Mucosa of descending colon (tissue), 3 donors: ENCODE measurements at regions of chr11 and their contacts with region 1.

Region 1: GRCh38 chr11:123707606-123708205 is 33.8 kb downstream of the ZNF202 start:
- DNase-seq: peak in 2 of 3 donors; percentile 46 to 83
- ATAC-seq: peak; percentile 69
- H3K4me3 ChIP-seq: no peak overlapping the region
- H3K4me1 ChIP-seq: no peaks in the 10 kb centered on the region
- CTCF ChIP-seq: no peak

Region 2: DNA sequence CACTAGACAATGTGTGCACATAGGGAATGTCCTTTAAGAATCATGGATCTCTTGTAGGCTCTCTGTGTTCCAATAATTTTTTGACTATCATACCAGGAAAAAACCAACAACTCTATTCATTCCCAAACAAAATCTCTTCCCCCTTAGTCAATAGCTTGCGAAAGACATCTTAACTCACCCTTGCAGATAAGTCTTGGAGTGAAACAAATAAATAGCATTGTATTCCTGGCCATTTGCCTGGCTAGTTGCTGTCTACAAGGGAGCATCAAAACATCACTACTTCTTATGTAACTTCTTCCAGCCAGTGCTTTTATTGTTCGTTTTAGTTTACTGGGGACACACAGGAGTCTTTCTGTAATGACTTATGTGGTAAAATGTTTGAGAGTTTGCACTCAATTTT is 82.7 kb before region 1 on chr11:
- intact Hi-C with region 1: no loop called
- DNase-seq: no peak
- ATAC-seq: no peak
- H3K4me3 ChIP-seq: no peak overlapping the region
- H3K4me1 ChIP-seq: no peaks in the 10 kb centered on the region
- CTCF ChIP-seq: no peak

Region 3: DNA sequence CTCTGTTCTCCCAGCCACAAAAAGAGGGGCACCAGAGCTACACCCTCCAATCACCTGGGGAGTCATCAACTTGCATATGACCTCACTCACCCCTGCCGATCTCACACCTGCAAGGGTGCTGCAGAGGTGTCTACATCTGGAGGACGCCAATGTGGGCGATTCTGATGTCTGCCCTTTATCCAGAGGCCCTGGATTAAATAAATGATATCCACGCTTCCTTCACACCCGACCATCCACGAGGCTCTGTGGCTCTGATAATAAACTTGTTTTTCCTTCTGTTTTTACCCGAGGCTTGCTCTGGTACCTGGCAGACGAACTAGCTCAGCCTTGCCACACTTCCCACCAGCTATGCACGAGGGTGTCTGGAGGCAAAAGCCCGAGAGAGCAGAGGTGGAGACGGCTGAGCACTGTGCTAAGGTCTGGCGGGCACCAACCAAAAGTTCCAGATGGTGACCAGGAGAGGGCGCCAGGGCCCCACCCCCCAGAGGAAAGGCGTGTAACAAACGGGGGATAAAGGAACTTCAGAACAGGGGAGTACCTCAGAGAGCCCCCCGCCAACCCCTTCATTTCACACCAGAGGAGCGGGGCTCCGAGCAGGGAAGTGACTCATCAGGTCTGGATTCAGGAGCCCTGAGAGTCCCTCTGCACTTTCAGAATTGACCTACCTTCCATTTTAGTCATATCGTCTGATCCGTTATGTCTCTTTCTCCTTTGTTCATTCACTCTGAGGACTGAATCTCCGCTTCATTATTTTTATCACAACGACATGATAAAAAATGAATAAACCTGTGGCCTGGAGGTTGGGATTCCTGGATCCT is 66.8 kb before region 1 on chr11:
- intact Hi-C with region 1: loop called in 1 of 2 experiments (anchors 5 kb)
- DNase-seq: peak in 2 of 3 donors; percentile 41 to 55
- ATAC-seq: peak; percentile 76
- H3K4me3 ChIP-seq: no peak overlapping the region
- H3K4me1 ChIP-seq: no peaks in the 10 kb centered on the region
- CTCF ChIP-seq: peak; percentile 30